PC-3 (cell line): ENCODE measurements at regions of chr1 and their contacts with region 1.

Region 1: DNA sequence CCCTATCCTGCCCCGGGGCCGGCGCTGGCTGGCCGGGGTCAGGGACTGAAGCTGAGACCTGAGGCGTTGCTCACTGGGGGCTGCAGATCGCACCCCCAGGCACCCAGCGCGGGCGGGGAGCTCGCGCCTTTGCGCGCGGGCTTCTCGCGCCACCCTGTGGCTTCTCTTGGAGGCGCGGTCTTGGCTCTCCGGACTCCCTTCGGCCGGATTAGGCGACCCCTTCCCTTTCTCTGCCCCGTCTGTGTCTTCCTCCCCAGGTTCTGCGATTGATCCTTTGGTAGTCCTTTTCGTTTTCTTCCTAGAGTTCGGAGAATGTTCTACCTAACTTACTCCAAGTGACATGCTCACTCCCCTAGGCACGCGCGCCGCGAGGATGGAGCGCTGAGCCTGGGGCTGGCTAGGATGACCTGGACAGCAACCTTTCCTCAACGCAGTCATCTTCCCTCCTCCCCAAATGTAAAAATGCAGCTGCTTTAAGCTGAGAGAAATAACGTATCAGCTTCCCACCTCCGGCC is 495 bp upstream of the NTRK1 start:
- DNase-seq: peak; percentile 65
- ATAC-seq: peak; percentile 66
- H3K4me3 ChIP-seq: peak overlapping the region; percentile 63
- H3K27ac ChIP-seq: no peak overlapping the region
- H3K4me1 ChIP-seq: peaks cover 22% of the 10 kb centered on the region
- H3K27me3 ChIP-seq: peaks cover 45% of the 10 kb centered on the region
- CTCF ChIP-seq: peak; percentile 96

Region 2: DNA sequence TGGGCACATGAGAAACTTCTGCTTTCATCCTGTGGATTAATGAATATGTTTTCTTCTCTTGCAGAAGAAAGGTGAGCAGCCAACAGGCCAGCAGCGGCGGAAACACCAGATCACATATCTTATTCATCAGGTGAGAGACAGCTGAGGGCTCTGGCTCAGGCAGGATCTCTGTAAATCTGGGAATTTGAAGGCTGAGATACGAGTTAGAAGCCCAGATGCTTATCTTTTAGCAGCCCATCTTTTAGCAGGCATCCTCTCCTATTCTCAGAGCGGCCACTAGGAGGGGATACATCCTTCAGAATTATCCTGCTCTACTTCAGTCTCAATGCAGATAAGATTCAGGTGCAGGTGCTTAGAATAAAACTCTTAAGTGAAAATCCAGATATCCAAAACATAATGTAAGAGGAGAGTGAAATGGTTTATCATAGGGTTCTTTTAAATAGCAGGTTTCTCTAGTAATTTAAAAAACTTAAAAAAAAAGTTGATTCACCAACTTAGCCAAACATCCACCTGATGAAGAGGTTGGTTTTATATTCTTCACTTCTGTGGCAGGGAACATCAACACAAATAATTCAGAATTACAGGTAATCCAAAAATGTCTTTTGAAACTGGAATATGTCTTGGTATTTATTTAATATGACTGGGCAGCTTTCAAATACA is 62.8 kb before region 1 on chr1:
- CTCF ChIA-PET with region 1: interaction called, 12 read pairs
- POLR2A ChIA-PET with region 1: no interaction called
- intact Hi-C with region 1: loop called (anchors 1 kb)
- DNase-seq: peak; percentile 85
- ATAC-seq: peak; percentile 79
- H3K4me3 ChIP-seq: no peak overlapping the region
- H3K27ac ChIP-seq: no peak overlapping the region
- H3K4me1 ChIP-seq: peaks cover 10% of the 10 kb centered on the region
- H3K27me3 ChIP-seq: no peaks in the 10 kb centered on the region
- CTCF ChIP-seq: peak; percentile 97